ENCODE measurements at regions of chr2 and their contacts with region 1.

Region 1: DNA sequence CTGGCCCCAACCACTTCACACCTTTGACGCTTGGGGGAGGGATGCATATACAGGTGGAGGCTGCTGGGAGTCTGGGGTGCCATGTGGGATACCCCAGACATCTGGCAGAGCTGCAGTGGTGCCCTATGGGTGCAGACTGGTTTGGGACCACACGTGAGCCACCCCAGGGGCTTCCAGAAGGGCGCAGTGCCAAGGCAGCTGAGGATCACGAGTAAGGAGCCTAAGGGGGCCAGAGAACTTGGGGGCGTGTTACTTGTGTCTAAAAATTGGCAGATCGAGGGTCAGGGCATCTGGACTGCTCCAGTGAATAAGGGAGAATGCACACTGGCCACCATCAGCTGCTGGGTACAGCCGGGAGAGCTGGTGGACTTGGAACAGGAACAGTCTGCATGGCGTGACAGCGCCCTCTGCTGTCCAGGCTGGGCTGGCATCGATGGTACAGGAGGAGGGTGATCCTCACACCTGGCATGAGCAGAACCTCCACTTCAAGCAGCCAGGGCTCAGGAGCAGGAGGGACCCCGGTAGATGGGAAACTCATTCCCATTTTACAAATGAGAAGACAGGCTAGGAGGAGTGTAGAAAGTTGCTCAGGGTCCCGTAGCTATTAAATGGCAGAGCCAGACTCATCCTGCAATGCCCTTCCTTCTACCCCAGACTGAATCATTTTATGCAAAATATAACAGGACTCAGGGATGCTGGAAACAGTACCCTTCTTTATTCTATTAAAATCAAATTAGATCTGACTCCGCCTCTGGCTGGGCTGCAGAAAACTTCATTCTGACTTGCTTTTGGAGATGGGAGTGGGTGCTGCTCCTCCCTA is 60.4 kb downstream of the ATOH8 start:
- DNase-seq: peak; percentile 86 to 97
- H3K4me3 ChIP-seq: no peak overlapping the region
- CTCF ChIP-seq: peak in 1 of 3 donors; percentile 92
- POLR2A ChIP-seq: no peak

Region 2: DNA sequence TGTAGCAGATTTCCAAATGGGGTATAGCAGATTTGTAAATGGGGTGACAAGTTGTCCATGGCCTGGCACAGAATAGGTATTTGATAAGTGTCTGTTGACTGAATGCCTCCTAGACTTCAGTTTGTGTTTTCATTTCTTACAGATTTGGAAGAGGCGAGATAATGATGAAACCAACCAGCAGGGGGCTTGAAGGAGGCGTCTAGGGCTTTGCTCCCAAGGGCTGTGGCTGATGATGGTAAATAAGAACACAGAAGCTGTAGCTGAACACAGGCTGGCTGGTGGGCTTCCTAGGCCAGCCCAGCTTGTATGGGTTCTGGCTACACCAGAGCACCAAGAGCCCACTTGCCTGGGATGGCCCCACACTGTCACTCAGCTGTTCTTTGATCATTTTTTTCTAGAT is 165.6 kb before region 1 on chr2:
- intact Hi-C with region 1: loop called (anchors 10 kb)
- DNase-seq: no peak
- H3K4me3 ChIP-seq: no peak overlapping the region
- CTCF ChIP-seq: no peak
- POLR2A ChIP-seq: no peak

Region 3: DNA sequence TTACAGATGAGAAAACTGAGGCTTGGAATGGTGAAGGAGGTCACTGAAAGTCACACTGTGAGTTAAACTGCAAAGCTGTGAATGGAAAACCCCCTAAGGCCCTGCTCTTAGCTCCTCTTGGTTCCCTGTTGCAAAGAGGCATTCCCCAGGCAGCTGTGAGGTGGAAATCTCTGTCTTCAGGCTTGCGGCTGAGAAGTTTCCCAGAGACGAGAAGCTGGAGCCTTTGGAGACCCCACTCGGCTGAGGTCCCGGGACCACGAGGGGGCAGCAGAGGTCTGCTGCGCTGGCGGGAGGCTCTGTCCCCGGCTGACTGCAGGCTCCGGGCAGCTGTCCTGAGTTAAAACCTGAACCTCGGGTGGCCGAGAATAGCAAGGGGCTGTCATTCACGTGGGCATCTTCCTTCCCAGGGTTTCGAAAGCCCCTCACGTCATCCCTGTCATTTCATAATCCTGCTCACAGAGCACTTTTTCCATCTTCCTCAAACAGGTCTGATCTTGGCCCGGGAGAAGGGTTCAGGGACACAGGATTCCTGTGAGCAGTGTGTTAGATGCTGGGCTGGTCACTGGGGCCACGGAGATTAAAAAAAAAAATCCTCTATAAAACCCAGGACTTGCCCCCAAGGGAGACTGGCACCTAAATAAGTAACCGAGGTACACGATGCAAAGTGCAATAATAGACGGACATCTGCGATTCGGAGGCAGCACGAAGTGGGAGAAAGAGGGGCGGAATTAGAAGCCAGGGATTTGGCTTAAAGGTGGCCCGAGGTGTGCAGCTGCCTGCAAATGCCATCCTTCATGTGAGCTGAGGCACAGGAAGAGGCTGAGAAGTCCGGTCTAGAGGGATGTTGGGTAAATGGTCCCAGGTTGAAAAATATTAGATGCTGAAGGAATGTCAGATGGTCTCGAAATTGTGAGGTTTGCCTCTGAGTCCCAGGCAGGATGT is 85.0 kb before region 1 on chr2:
- intact Hi-C with region 1: loop called (anchors 2 kb)
- DNase-seq: peak; percentile 86 to 98
- H3K4me3 ChIP-seq: no peak overlapping the region
- CTCF ChIP-seq: peak in 1 of 3 donors; percentile 91
- POLR2A ChIP-seq: no peak

Region 4: GRCh38 chr2:85750587-85751575 is 63.3 kb before region 1 on chr2:
- intact Hi-C with region 1: loop called (anchors 10 kb)
- DNase-seq: peak; percentile 68 to 95
- H3K4me3 ChIP-seq: no peak overlapping the region
- CTCF ChIP-seq: peak in 1 of 3 donors; percentile 34
- POLR2A ChIP-seq: no peak